CD14-positive monocyte (primary cell): ENCODE measurements at regions of chr14 and their contacts with region 1.

Region 1: GRCh38 chr14:64986578-64987571 is at the start of gene FNTB:
- DNase-seq: peak; percentile 88 to 93 (median 91)
- H3K4me3 ChIP-seq: peak within 1 kb of the TSS; percentile 76 to 97 (median 82)
- H3K4me3 Mint-ChIP-seq: peak within 1 kb of the TSS; percentile 100
- H3K27ac ChIP-seq: peak within 1 kb of the TSS; percentile 57 to 83
- H3K27ac Mint-ChIP-seq: peak within 1 kb of the TSS; percentile 95 to 99 (median 97)
- H3K4me1 ChIP-seq: peaks cover 42 to 56% of the 10 kb centered on the region in 2 donors
- H3K4me1 Mint-ChIP-seq: peaks cover 53% of the 10 kb centered on the region
- H3K27me3 ChIP-seq: no peaks in the 10 kb centered on the region
- H3K27me3 Mint-ChIP-seq: peaks cover 1 to 14% (median 3%) of the 10 kb centered on the region in 3 donors
- CTCF ChIP-seq: no peak
- polyA plus RNA-seq, gene FNTB: 12.3 to 14.2 (median 14.1) TPM

Region 2: DNA sequence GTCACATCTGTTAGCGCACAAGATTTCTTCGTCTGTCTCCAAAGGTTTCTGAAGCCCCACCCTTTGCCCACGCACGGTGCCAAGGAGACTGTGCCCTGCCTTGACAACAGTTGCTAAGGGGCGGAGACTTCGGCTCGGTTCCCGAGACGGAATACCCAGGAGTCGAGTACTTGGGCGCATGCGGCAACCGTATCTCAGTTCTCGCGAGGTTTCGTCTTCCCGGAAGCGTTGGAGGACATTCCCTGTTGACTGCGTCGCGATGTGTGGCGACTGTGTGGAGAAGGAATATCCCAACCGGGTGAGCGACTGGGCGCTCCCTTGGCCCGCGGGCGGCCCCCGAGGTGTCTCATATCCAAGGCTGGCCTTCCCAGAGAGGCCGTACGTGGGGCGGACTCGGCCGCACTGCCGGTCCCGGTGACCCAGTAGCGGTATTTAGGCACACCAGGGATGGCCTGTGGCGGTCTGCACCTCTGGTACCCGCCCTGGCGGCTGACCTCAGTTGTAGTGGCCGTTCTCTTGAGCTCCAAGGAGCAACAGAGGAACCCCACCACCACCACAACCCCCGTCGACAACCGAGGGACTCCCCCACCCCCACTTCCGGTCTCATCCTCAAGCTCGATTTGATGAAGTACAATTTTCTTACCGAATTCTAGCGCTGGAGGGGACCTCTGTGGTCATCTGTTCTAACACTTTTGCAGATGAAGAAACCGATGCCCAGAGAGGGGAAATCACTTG is 72.5 kb before region 1 on chr14 and contains the start of gene CHURC1:
- intact Hi-C with region 1: loop called (anchors 10 kb)
- DNase-seq: peak; percentile 95 to 98 (median 97)
- H3K4me3 ChIP-seq: peak within 1 kb of the TSS; percentile 89 to 97 (median 93)
- H3K4me3 Mint-ChIP-seq: peak within 1 kb of the TSS; percentile 81 to 92
- H3K27ac ChIP-seq: peak within 1 kb of the TSS; percentile 93 to 98
- H3K27ac Mint-ChIP-seq: peak within 1 kb of the TSS; percentile 92 to 97 (median 95)
- H3K4me1 ChIP-seq: peaks cover 21 to 24% of the 10 kb centered on the region in 2 donors
- H3K4me1 Mint-ChIP-seq: peaks cover 30% of the 10 kb centered on the region
- H3K27me3 ChIP-seq: peaks cover 0 to 2% of the 10 kb centered on the region in 2 donors
- H3K27me3 Mint-ChIP-seq: peaks cover 3 to 7% (median 6%) of the 10 kb centered on the region in 3 donors
- CTCF ChIP-seq: no peak
- polyA plus RNA-seq, gene CHURC1: 31.1 to 98.3 (median 81.2) TPM